ENCODE measurements at regions of chr11 and their contacts with region 1.

Region 1: GRCh38 chr11:18540207-18541009 is 13.7 kb upstream of the TSG101 start:
- DNase-seq: no peak
- ATAC-seq: no peak
- H3K4me3 ChIP-seq: no peak overlapping the region
- H3K27ac ChIP-seq: no peak overlapping the region
- H3K4me1 ChIP-seq: no peaks in the 10 kb centered on the region
- H3K27me3 ChIP-seq: no peaks in the 10 kb centered on the region
- CTCF ChIP-seq: peak in 7 of 9 donors; percentile 18 to 56 (median 47)

Region 2: DNA sequence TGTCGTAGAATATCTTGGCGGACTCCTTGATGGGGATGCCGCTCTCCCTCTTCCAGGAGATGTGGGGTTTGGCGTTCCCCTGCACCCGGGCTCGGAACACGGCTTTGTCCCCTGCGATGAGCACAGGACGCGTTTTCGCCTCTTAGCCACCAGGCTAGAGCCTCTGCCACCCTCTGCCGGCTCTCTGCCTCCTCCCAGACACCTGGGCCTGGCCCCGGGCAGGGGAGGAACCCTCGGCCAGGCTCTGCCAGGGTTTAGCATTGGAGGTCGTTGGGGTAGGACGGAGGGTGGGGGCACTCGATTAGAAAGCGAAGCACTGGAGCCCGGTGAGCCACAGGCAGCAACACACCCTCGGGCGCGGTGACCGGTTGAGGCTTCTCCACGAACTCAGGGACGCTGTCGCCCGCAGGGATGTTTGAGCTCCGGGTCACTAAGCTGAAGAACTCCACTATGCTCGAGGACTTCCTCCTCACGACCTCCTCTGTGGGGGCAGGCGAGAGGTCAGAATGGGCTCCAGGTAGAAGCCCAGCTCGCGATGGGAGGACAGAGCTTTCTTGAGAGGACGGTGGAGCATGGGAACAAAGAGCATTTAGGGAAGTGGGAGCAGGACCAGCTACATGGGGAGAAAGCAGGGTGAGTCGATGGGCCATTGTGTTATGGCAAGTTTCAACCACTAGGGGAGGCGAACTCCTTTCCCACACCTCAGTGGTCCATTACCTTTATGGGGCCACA is 181.3 kb after region 1 on chr11:
- intact Hi-C with region 1: loop called in 2 of 10 experiments (anchors 10 kb)
- DNase-seq: peak; percentile 26 to 40
- ATAC-seq: peak; percentile 54 to 83 (median 70)
- H3K4me3 ChIP-seq: peak overlapping the region; percentile 33 to 72 (median 61)
- H3K27ac ChIP-seq: peak overlapping the region in 9 of 10 donors; percentile 33 to 63 (median 47)
- H3K4me1 ChIP-seq: peaks cover 0 to 18% (median 10%) of the 10 kb centered on the region in 9 donors
- H3K27me3 ChIP-seq: no peaks in the 10 kb centered on the region
- CTCF ChIP-seq: peak; percentile 61 to 87 (median 71)